CD4-positive, alpha-beta T cell (primary cell): ENCODE measurements at regions of chr3 and their contacts with region 1.

Region 1: GRCh38 chr3:150603153-150603979 is at the start of gene SELENOT:
- DNase-seq: peak; percentile 86 to 98 (median 94)
- ATAC-seq: peak; percentile 79
- H3K4me3 ChIP-seq: peak within 1 kb of the TSS; percentile 92
- H3K4me3 Mint-ChIP-seq: peak within 1 kb of the TSS; percentile 96
- H3K27ac ChIP-seq: peak within 1 kb of the TSS; percentile 97 to 98
- H3K27ac Mint-ChIP-seq: peak within 1 kb of the TSS; percentile 100
- H3K4me1 ChIP-seq: peaks cover 34% of the 10 kb centered on the region
- H3K4me1 Mint-ChIP-seq: peaks cover 75% of the 10 kb centered on the region
- H3K27me3 ChIP-seq: no peaks in the 10 kb centered on the region
- H3K27me3 Mint-ChIP-seq: no peaks in the 10 kb centered on the region
- CTCF ChIP-seq: no peak
- total RNA-seq, gene SELENOT: 110 to 115 TPM

Region 2: DNA sequence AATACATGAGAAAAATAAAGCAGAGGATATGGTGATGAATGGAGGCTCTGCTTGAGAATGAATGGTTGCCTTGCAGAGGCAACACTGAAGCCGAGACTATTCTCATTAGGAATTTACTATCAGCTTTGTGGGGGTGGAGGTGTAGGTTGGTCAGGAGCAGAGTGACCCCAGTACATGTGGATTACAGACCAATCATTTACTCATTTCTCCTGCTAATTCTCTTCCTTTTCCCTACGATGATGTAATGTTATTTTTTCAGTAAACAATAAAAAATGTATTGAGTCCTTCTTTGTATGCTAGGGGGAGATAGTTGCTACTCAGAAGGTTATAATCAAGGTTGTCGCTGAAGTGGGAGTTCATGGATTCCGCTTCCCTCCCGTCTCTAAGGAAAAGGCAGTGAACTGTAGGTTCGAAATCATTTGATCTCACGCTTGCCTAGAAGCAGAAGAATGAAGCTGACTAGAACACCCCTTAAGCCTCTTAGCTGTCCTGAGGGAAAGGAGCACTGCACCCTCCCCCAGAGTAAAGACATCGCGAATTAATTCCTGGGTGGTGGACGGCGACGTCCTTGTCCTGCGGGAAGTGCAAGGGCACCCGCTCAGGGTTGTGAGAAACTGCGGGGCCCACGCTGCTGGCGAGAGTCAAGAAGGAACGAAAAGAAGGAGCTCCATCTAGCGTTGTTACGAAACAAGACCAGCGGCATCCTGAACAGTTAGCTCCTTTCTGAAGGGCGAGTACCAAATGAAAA is 419.5 kb before region 1 on chr3:
- CTCF ChIA-PET with region 1: no interaction called
- POLR2A ChIA-PET with region 1: no interaction called
- intact Hi-C with region 1: no loop called
- DNase-seq: peak; percentile 6 to 71 (median 24)
- ATAC-seq: peak; percentile 75
- H3K4me3 ChIP-seq: peak overlapping the region; percentile 13
- H3K4me3 Mint-ChIP-seq: no peak overlapping the region
- H3K27ac ChIP-seq: no peak overlapping the region
- H3K27ac Mint-ChIP-seq: no peak overlapping the region
- H3K4me1 ChIP-seq: peaks cover 8% of the 10 kb centered on the region
- H3K4me1 Mint-ChIP-seq: no peaks in the 10 kb centered on the region
- H3K27me3 ChIP-seq: peaks cover 0 to 11% of the 10 kb centered on the region in 2 experiments
- H3K27me3 Mint-ChIP-seq: peaks cover 27% of the 10 kb centered on the region
- CTCF ChIP-seq: peak; percentile 47

Region 3: DNA sequence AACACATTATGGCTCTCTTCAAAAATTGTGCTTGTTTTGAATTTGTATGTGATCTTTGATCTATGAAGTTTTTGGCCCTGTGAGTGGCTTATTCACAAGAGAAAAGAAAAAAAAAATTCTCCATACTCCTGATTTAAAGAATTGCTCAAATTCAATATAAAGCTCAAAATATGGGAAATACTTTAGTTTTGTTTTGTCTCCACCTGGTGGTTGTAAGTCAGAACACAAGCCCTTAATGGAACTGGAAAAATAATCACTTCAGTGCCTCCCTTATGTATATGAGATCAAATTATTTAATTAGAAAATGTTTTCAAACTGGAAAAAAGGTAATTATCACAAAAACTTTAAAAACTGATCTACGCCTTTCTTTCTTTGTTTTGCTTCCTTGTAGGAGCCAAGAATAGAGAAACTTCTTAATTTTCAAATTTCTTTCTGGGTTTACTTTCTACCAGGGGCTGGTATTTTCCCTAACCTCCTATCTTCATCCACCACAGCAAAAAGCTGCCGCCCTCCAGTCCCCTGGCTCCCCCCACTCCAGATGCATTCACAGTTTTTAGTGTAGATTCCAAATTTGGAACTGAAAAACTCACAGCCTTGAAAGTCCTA is 107.7 kb before region 1 on chr3:
- CTCF ChIA-PET with region 1: no interaction called
- POLR2A ChIA-PET with region 1: no interaction called
- intact Hi-C with region 1: no loop called
- DNase-seq: peak in 5 of 14 experiments; percentile 3 to 74 (median 63)
- ATAC-seq: peak; percentile 64
- H3K4me3 ChIP-seq: no peak overlapping the region
- H3K4me3 Mint-ChIP-seq: no peak overlapping the region
- H3K27ac ChIP-seq: no peak overlapping the region
- H3K27ac Mint-ChIP-seq: no peak overlapping the region
- H3K4me1 ChIP-seq: no peaks in the 10 kb centered on the region
- H3K4me1 Mint-ChIP-seq: no peaks in the 10 kb centered on the region
- H3K27me3 ChIP-seq: no peaks in the 10 kb centered on the region
- H3K27me3 Mint-ChIP-seq: no peaks in the 10 kb centered on the region
- CTCF ChIP-seq: peak; percentile 85

Region 4: GRCh38 chr3:150546226-150547044 is 56.9 kb before region 1 on chr3 and contains the starts of genes EIF2A and SERP1:
- CTCF ChIA-PET with region 1: interaction called, 3 read pairs
- POLR2A ChIA-PET with region 1: interaction called, 77 read pairs
- intact Hi-C with region 1: loop called (anchors 1 kb)
- DNase-seq: peak; percentile 98 to 100 (median 99)
- ATAC-seq: peak; percentile 88
- H3K4me3 ChIP-seq: peak within 1 kb of the TSS; percentile 86
- H3K4me3 Mint-ChIP-seq: peak within 1 kb of the TSS; percentile 91
- H3K27ac ChIP-seq: peak within 1 kb of the TSS; percentile 98 to 99
- H3K27ac Mint-ChIP-seq: peak within 1 kb of the TSS; percentile 93
- H3K4me1 ChIP-seq: peaks cover 19% of the 10 kb centered on the region
- H3K4me1 Mint-ChIP-seq: peaks cover 73% of the 10 kb centered on the region
- H3K27me3 ChIP-seq: no peaks in the 10 kb centered on the region
- H3K27me3 Mint-ChIP-seq: no peaks in the 10 kb centered on the region
- CTCF ChIP-seq: no peak
- total RNA-seq, gene EIF2A: 115 to 122 TPM
- total RNA-seq, gene SERP1: 141 to 147 TPM

Region 5: DNA sequence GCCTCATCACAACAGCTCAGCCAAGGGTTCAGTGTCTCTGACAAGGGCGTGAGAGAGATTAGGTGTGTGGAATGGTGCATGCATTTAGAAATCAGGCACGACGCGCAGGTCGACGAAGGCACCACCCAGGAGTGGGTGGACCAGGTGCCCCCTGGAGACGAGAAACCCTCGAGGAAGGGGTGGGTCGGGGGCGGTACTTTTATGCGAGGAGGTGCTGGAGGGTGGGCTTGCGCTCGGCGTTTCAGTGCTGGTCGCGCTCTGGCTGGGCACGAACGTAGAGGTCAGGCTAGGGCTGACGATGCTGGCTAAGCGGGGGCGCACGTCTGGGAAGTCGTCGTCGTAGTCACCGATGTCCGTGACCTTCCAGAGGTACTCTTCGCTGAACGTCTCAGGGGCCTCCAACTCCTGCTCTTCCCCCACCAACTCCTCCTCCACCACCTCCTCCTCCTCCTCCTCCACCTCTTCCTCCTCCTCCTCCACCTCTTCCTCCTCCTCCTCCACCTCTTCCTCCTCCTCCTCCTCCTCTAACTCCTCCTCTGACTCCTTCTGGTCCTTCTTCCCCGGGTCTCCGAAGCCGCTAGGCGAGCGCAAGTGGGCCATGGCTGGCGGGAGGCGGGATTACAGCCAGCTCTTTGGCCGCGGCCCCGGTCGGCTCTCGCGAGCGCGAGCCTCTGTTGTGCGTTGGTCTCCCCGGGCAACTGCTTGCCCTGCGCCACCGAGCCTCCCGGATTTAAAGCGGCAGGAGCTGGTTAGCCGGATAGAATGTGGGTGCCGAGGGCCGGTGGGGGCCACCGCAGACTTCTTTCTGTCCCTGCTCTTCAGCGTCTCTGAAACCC is 100.2 kb after region 1 on chr3 and contains the start of gene ERICH6:
- CTCF ChIA-PET with region 1: no interaction called
- POLR2A ChIA-PET with region 1: interaction called, 20 read pairs
- intact Hi-C with region 1: loop called (anchors 1 to 5 kb)
- DNase-seq: peak; percentile 54 to 90 (median 69)
- ATAC-seq: peak; percentile 71
- H3K4me3 ChIP-seq: peak within 1 kb of the TSS; percentile 90
- H3K4me3 Mint-ChIP-seq: peak within 1 kb of the TSS; percentile 99
- H3K27ac ChIP-seq: peak within 1 kb of the TSS; percentile 77 to 89
- H3K27ac Mint-ChIP-seq: peak within 1 kb of the TSS; percentile 99
- H3K4me1 ChIP-seq: peaks cover 17% of the 10 kb centered on the region
- H3K4me1 Mint-ChIP-seq: peaks cover 26% of the 10 kb centered on the region
- H3K27me3 ChIP-seq: no peaks in the 10 kb centered on the region
- H3K27me3 Mint-ChIP-seq: no peaks in the 10 kb centered on the region
- CTCF ChIP-seq: no peak
- total RNA-seq, gene ERICH6: not detected

Region 6: DNA sequence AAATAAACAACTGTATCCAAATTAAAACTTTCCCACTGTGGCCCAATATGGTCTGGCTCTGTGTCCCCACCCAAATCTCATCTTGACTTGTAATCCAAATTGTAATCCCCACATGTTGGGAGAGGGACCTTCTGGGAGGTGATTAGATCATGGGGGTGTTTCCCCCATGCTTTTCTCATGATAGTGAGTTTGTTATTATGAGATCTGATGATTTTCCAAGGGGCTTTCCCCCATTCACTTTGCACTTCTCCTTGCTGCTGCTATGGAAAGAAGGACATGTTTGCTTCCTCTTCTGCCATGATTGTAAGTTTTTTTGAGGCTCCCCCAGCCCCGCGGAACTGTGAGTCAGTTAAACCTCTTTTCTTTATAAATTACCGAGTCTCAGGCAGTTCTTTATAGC is 246.8 kb after region 1 on chr3:
- CTCF ChIA-PET with region 1: no interaction called
- POLR2A ChIA-PET with region 1: no interaction called
- intact Hi-C with region 1: no loop called
- DNase-seq: no peak
- ATAC-seq: no peak
- H3K4me3 ChIP-seq: no peak overlapping the region
- H3K4me3 Mint-ChIP-seq: no peak overlapping the region
- H3K27ac ChIP-seq: no peak overlapping the region
- H3K27ac Mint-ChIP-seq: no peak overlapping the region
- H3K4me1 ChIP-seq: no peaks in the 10 kb centered on the region
- H3K4me1 Mint-ChIP-seq: no peaks in the 10 kb centered on the region
- H3K27me3 ChIP-seq: peaks cover 0 to 8% of the 10 kb centered on the region in 2 experiments
- H3K27me3 Mint-ChIP-seq: peaks cover 4% of the 10 kb centered on the region
- CTCF ChIP-seq: no peak